ENCODE measurements at regions of chr5 and their contacts with region 1.

Region 1: GRCh38 chr5:160079753-160080152 is 39.5 kb downstream of the PWWP2A start:
- DNase-seq: no peak
- H3K4me3 Mint-ChIP-seq: no peak overlapping the region
- H3K27ac Mint-ChIP-seq: no peak overlapping the region
- H3K4me1 Mint-ChIP-seq: no peaks in the 10 kb centered on the region
- H3K27me3 Mint-ChIP-seq: no peaks in the 10 kb centered on the region

Region 2: DNA sequence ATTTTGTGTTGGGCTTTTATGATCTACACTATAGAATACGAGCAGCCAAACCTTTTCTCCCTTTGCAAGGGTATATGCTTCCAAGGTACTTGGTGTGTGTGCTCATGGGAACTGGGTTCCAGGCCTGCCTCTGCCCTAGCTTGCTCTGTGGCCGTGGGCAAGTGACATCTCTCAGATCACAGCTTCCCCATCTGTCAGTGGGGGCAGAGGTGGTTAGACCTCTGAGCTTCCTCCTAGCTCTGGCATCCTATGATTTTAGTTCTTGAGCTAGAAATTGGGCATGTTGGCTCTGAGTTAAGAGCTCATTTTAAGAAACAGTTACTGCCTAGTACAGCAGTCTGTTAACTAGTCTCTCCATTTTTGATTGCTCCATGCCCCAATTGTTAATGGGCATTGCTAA is 245.1 kb after region 1 on chr5:
- intact Hi-C with region 1: no loop called
- DNase-seq: no peak
- H3K4me3 Mint-ChIP-seq: no peak overlapping the region
- H3K27ac Mint-ChIP-seq: no peak overlapping the region
- H3K4me1 Mint-ChIP-seq: no peaks in the 10 kb centered on the region
- H3K27me3 Mint-ChIP-seq: peaks cover 7% of the 10 kb centered on the region

Region 3: GRCh38 chr5:160342403-160342941 is 262.7 kb after region 1 on chr5:
- intact Hi-C with region 1: loop called (anchors 1 kb)
- DNase-seq: no peak
- H3K4me3 Mint-ChIP-seq: no peak overlapping the region
- H3K27ac Mint-ChIP-seq: no peak overlapping the region
- H3K4me1 Mint-ChIP-seq: peaks cover 4% of the 10 kb centered on the region
- H3K27me3 Mint-ChIP-seq: peaks cover 9% of the 10 kb centered on the region